ENCODE measurements at regions of chr11 and their contacts with region 1.

Region 1: GRCh38 chr11:130213143-130213978 is 53.8 kb downstream of the ST14 start:
- DNase-seq: peak; percentile 73
- ATAC-seq: peak; percentile 91
- H3K4me3 Mint-ChIP-seq: no peak overlapping the region
- H3K27ac Mint-ChIP-seq: no peak overlapping the region
- H3K4me1 Mint-ChIP-seq: no peaks in the 10 kb centered on the region
- H3K27me3 Mint-ChIP-seq: peaks cover 7% of the 10 kb centered on the region

Region 2: DNA sequence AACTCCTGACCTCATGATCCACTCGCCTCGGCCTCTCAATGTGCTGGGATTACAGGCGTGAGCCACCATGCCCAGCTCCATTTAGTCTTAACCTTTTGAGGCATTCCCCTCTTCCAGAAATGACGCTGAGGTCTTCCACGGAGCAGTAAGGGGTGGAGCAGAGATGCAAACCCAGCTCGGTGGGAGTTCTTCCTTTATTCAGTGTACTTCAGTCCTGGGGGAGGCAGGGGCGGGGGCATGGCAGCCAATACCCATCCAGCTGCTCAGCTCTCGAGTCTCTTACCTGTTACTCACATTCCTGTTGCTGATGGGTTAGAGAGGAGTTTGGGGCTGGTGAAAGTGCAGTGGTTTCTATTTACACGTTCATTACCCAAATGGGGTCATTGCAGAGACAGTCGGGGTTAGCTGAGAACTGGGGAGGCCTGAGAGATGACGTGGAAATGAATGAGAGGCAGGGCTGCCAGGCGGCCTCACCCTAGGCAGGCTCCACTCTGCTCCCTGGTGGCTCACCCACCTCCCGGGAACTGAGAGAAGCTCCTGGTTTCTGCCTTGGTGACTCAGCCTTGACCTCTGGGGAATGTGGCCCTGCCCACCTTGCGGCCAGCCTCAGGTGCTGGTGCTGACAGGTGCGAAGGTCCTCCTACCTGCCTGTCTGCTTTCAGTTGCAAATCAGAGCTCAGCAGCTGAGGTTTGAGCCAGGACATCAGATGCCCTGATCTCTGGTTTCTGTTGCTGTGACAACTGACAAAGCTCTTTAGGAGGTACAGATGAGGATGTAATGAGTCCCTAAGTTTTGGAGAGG is 67.2 kb before region 1 on chr11:
- CTCF ChIA-PET with region 1: no interaction called
- DNase-seq: no peak
- ATAC-seq: no peak
- H3K4me3 Mint-ChIP-seq: no peak overlapping the region
- H3K27ac Mint-ChIP-seq: no peak overlapping the region
- H3K4me1 Mint-ChIP-seq: peaks cover 7% of the 10 kb centered on the region
- H3K27me3 Mint-ChIP-seq: peaks cover under 1% of the 10 kb centered on the region

Region 3: DNA sequence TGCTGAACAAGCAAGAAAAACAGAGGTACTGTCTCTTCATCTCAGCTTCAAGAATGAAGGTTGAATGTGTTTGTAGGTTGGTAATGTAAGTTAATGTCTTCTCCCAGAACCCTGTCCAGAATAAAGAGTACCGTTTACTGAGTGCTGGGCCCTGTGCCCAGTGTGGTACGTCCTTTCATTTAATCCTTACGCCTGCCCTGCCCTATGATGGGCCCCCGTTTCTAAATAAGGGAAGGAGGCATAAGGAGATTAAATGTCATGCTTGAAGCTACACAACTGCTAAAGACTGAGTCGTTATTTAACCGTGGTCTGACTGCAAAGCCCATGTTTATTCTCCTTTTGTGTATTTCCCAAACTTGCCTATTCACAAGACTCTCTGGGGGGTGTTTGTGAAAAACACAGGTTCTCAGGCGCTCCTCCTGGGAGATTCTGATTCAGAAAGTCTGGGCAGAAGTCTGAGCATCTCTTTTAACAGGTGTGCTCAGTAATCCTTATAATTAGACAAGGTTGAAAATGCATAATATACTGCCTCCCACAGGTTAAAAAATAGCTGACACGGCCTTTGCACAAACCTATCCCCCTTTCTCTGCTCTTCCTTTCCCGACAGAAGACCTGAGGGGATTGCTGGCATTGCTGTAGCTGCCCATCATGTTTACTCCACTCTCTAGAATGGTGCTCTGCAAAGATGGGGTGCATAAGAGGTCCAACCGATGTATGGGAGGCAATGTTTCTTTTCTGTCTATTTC is 157.7 kb after region 1 on chr11:
- CTCF ChIA-PET with region 1: interaction called, 26 read pairs
- DNase-seq: no peak
- ATAC-seq: no peak
- H3K4me3 Mint-ChIP-seq: no peak overlapping the region
- H3K27ac Mint-ChIP-seq: no peak overlapping the region
- H3K4me1 Mint-ChIP-seq: no peaks in the 10 kb centered on the region
- H3K27me3 Mint-ChIP-seq: no peaks in the 10 kb centered on the region

Region 4: GRCh38 chr11:130403271-130403804 is 190.0 kb after region 1 on chr11:
- CTCF ChIA-PET with region 1: no interaction called
- DNase-seq: no peak
- ATAC-seq: no peak
- H3K4me3 Mint-ChIP-seq: no peak overlapping the region
- H3K27ac Mint-ChIP-seq: no peak overlapping the region
- H3K4me1 Mint-ChIP-seq: peaks cover 7% of the 10 kb centered on the region
- H3K27me3 Mint-ChIP-seq: peaks cover 23% of the 10 kb centered on the region

Region 5: DNA sequence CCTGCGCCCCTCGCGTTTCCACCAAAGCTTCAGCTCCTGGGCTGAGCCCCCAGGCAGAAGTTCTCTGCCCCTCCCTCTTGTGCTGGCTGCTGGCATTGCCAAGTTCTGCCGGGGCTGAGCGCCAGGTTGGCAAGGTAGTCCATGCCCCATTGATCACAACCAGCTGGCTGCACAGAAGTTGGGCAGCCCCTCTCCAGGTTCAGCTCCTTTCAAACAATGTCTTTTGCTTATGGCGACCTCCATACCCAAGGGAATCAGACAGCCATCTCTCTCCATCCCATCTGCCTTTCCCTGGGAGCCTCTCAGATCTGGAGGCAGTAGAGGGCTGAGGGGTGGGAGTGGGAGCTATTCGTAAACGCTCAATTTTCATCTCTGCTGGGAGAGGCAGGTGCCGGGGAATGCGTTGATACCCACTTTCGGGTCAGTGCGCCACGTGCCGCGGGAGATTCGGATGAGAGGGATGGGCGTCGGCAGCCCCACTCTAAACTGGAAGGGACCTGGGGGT is 213.5 kb after region 1 on chr11:
- CTCF ChIA-PET with region 1: interaction called, 25 read pairs
- DNase-seq: no peak
- ATAC-seq: no peak
- H3K4me3 Mint-ChIP-seq: no peak overlapping the region
- H3K27ac Mint-ChIP-seq: no peak overlapping the region
- H3K4me1 Mint-ChIP-seq: peaks cover 12% of the 10 kb centered on the region
- H3K27me3 Mint-ChIP-seq: peaks cover 57% of the 10 kb centered on the region

Region 6: DNA sequence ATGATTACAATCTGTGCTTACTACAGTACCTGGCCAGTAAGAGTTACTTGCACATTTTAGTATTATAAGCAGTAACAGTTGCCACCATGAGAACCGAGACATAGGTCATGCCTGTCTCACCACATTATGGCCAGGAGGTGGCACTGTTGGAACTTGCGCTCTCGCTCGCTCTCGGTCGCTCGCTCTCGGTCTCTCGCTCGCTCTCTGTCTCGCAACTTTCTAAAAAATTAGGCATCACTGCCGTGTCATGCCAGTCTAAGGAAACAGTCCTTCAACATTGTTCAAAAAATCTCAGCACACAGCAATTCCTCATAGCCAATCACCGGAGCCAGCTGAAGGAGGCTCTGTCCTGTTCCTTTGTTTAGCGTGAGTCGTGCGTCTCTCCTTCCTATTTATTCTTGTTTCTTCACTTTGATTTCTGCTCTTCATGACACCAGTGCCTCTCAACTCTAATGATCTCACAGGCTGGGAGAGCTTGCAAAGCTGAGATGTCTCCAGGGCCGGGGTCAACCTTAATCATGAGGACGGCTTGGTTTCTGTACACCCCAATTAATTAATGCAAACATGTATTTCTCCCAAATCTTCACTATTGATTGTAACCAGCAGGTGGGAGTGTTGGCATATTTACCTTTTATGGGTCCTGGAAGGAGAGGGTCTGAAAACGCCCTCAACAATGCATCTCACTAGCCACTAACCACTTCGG is 221.3 kb after region 1 on chr11:
- CTCF ChIA-PET with region 1: interaction called, 25 read pairs
- DNase-seq: peak; percentile 81
- ATAC-seq: peak; percentile 82
- H3K4me3 Mint-ChIP-seq: no peak overlapping the region
- H3K27ac Mint-ChIP-seq: no peak overlapping the region
- H3K4me1 Mint-ChIP-seq: peaks cover 31% of the 10 kb centered on the region
- H3K27me3 Mint-ChIP-seq: peaks cover 34% of the 10 kb centered on the region

Region 7: GRCh38 chr11:130465263-130465662 is 251.9 kb after region 1 on chr11:
- CTCF ChIA-PET with region 1: no interaction called
- DNase-seq: no peak
- ATAC-seq: no peak
- H3K4me3 Mint-ChIP-seq: no peak overlapping the region
- H3K27ac Mint-ChIP-seq: no peak overlapping the region
- H3K4me1 Mint-ChIP-seq: no peaks in the 10 kb centered on the region
- H3K27me3 Mint-ChIP-seq: no peaks in the 10 kb centered on the region

Measured in activated CD8-positive, alpha-beta memory T cell treated with anti-CD3 and anti-CD28 coated beads, Interleukin-2, amount 10 ng/mL, durations not matched to agents 7 days and 5 days (primary cell).